ENCODE measurements at regions of chr14 and their contacts with region 1.

Region 1: DNA sequence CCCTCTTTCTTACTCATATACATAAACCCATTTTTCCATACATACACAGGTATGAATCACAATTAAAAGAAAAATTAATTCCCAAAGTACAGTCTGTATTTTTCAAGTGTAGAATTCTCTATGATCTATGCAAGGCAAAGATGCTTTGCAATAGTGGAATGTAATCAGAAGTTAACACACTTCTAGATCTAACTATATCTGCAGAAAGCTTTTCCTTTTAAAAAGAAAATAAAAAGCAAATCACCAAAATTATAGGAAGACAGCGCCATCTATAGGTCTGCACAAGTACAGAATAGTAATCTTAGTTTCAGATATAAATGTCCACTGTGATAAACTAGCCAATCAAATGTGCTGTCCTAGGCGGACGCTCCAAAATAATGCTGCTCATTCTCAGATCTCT is 22.0 kb downstream of the SLC25A21 start:
- DNase-seq: peak; percentile 63
- H3K4me3 Mint-ChIP-seq: no peak overlapping the region
- H3K27ac Mint-ChIP-seq: peak overlapping the region; percentile 16
- H3K4me1 Mint-ChIP-seq: peaks cover 14% of the 10 kb centered on the region
- H3K27me3 Mint-ChIP-seq: no peaks in the 10 kb centered on the region
- CTCF ChIP-seq: peak; percentile 54

Region 2: DNA sequence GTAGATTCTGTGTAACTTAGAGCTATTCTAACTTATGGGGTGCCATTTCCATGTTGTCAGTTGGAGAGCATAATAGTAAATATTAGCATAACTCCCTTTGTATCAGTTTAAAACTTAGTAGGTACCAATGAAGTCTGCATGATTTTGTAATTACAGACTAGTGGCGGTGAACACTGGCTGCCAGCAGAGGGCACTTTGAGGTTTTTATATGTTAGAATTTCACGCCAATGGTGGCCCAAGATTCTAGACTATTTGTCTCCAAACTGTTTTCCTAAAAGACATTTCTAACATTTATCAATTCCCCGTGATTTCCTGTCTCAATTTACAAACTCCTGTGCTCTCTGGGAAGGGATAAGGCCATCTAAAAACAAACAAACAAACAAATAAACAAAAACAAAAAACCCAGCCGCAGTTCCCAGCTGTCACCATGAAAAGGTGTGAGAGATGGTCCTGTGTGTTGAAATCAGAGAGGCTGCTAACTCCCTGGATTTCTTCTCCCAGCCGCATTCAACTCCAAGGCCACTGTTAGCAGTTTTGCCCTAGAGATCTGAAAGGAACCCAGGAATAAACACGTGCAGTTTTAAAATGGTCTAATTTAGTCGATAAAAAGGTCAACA is 1266.6 kb before region 1 on chr14:
- CTCF ChIA-PET with region 1: interaction called, 8 read pairs
- POLR2A ChIA-PET with region 1: no interaction called
- intact Hi-C with region 1: loop called (anchors 1 kb)
- DNase-seq: peak; percentile 41
- H3K4me3 Mint-ChIP-seq: no peak overlapping the region
- H3K27ac Mint-ChIP-seq: no peak overlapping the region
- H3K4me1 Mint-ChIP-seq: peaks cover 14% of the 10 kb centered on the region
- H3K27me3 Mint-ChIP-seq: no peaks in the 10 kb centered on the region
- CTCF ChIP-seq: peak; percentile 66

Region 3: DNA sequence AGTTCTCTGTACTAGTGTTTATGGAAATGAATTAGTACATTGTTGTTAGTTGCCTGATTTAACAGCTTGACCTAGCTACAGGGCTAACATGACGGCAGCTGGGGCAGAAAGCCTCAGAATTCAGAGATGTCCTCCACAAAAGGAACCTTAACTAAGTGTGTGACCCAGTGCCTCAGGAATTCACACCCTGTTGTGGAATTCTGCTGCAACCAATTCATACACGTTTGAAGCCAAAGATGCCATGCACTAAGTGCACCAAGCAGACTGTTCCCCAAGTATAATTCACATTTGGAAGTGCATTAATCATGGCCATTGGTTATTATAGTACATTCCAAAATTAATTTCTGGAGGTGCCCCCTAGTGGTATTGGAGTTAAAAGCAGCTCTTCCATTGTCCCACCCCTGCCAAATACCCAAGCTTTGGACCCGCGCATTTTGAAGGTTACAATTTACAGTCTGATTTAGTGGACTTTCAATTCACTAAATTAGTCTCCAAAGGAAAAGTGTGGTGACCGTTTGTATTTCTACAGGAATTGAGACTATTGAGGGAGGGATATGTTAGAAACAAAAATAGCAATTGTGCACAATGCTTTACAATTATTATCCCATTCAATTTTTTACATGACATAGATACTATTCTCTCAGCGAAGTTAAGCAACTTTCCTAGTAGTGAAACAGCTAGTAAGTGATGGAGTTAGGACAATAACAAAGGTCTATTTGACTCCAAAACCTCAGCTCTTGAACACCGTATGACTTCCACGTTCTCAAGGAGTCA is 402.8 kb before region 1 on chr14:
- CTCF ChIA-PET with region 1: interaction called, 10 read pairs
- POLR2A ChIA-PET with region 1: no interaction called
- intact Hi-C with region 1: no loop called
- DNase-seq: peak; percentile 43
- H3K4me3 Mint-ChIP-seq: no peak overlapping the region
- H3K27ac Mint-ChIP-seq: no peak overlapping the region
- H3K4me1 Mint-ChIP-seq: no peaks in the 10 kb centered on the region
- H3K27me3 Mint-ChIP-seq: no peaks in the 10 kb centered on the region
- CTCF ChIP-seq: peak; percentile 51

Region 4: DNA sequence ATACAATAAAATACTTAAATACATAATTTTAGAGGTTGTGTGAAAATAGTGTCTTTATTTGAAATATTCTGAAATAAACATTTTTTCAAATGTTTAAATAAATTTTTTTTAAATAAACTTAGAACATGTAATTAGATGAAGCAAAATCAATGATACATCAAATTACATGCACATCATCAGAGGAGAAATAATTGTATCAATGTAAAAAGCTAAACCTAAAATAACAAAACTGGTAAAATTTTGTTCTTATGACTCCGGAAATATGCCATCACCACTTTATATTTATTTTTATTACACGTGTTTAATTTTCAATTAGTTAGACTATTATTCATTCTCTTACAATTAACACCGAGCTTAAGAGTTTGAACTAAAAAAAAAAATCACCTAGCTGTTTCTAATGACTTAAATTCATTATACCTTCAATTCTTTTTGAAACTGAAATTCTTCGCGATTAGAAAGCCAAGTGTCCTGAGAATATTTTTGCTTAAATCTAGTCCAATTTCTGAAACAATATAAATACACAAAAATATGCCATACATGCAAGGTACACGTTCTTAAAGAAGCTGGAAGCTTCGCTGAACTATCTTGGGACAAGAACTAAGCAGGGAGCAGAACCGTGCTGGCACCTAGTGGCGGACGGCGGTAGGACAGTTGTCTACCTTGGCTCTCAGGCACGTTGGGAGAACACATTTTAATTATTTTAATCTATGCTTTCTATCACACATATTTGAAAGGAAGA is 208.5 kb before region 1 on chr14:
- CTCF ChIA-PET with region 1: interaction called, 29 read pairs
- POLR2A ChIA-PET with region 1: interaction called, 7 read pairs
- intact Hi-C with region 1: loop called (anchors 1 kb)
- DNase-seq: peak; percentile 78
- H3K4me3 Mint-ChIP-seq: no peak overlapping the region
- H3K27ac Mint-ChIP-seq: peak overlapping the region; percentile 96
- H3K4me1 Mint-ChIP-seq: peaks cover 24% of the 10 kb centered on the region
- H3K27me3 Mint-ChIP-seq: no peaks in the 10 kb centered on the region
- CTCF ChIP-seq: peak; percentile 90

Region 5: GRCh38 chr14:37230551-37231194 is 80.3 kb after region 1 on chr14:
- CTCF ChIA-PET with region 1: interaction called, 10 read pairs
- POLR2A ChIA-PET with region 1: no interaction called
- intact Hi-C with region 1: loop called (anchors 2 kb)
- DNase-seq: peak; percentile 68
- H3K4me3 Mint-ChIP-seq: no peak overlapping the region
- H3K27ac Mint-ChIP-seq: no peak overlapping the region
- H3K4me1 Mint-ChIP-seq: no peaks in the 10 kb centered on the region
- H3K27me3 Mint-ChIP-seq: no peaks in the 10 kb centered on the region
- CTCF ChIP-seq: peak; percentile 63

Region 6: GRCh38 chr14:37246427-37246914 is 96.1 kb after region 1 on chr14:
- CTCF ChIA-PET with region 1: no interaction called
- POLR2A ChIA-PET with region 1: no interaction called
- intact Hi-C with region 1: no loop called
- DNase-seq: peak; percentile 64
- H3K4me3 Mint-ChIP-seq: no peak overlapping the region
- H3K27ac Mint-ChIP-seq: no peak overlapping the region
- H3K4me1 Mint-ChIP-seq: no peaks in the 10 kb centered on the region
- H3K27me3 Mint-ChIP-seq: no peaks in the 10 kb centered on the region
- CTCF ChIP-seq: peak; percentile 63

Region 7: DNA sequence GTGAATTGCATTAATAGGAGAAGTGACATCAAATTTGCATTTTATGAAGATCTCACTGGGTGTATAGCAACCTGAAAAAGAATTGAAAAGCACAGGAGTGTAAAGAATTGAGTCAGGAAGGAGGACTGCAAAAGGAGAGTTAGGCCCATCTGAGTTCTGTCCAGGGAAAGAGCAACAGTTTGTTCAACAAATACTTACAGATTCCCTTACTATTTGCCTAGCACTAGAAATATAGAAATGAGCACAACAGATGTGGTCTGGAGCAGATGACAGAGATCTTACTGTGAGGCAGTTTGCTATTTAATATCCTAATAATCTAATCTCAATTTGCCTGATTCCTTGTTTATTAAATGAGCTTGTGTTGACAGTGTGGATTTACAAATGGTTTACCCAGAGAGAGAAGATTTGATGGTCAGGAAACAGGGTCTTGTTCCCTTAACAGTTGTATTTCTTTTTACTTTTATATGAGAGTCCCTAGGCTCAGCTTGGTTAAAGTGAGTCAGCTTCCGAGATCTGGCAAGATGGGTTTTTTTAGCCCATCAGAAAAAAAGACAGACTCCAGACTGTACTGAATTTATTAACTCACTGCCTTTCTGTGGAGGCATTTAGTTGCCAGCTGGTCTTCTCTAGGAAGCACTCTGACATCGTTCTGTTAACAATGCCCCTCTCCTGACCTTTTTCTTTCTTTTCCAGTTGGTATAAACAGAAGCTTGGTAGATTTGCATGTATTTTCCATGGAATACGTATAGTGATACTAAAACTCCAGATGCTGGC is 674.7 kb after region 1 on chr14:
- CTCF ChIA-PET with region 1: no interaction called
- POLR2A ChIA-PET with region 1: no interaction called
- intact Hi-C with region 1: no loop called
- DNase-seq: no peak
- H3K4me3 Mint-ChIP-seq: no peak overlapping the region
- H3K27ac Mint-ChIP-seq: no peak overlapping the region
- H3K4me1 Mint-ChIP-seq: no peaks in the 10 kb centered on the region
- H3K27me3 Mint-ChIP-seq: no peaks in the 10 kb centered on the region
- CTCF ChIP-seq: no peak